Natural killer cell (primary cell): ENCODE measurements at regions of chr1 and their contacts with region 1.

Region 1: DNA sequence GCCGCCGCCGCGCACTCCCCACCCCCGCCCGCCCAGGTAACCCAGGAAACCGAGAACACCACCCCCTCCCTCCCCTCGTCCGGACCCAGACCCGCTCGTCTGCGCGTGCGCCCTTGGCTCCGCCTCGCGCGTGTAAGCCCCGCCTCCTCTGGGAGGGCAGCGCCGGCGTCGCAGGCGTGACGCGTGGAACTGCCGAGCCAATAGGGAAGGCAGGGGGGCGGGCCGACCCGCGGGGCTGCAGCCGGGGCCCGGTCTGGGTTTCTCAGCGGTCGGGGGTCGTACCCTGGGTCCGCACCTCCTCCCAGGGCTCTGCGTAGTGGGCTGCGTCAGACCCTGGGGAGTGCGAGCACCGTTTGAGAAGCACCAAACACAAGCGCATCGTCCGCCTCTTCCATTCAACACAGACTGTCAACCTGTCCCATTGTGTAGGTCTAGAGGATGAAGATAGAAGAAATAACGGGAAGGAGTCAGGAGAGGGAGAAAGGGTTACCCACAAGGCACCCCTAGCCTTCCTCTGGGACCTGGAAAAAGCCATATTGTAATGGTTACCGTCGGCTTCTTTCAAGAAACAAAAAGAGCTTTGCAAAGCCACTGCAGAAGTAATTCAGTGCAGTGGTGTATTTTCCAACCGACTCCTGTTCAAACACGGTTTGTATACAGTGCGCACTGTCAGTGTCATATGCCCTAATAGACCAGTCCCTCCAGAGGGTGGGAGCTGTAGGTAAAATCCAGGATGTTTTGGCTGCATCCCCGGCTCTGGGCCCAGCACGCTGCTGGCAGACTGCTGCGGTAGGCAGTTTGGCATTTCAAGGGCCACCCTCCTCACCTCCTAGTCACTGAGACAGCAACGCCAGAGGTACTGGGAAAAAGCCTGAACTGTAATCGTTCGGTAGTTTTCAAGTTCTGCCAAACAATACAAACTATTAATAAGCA is 473 bp upstream of the LYST start:
- DNase-seq: peak; percentile 99
- ATAC-seq: peak; percentile 72 to 89 (median 77)
- H3K4me3 ChIP-seq: peak overlapping the region; percentile 94
- H3K4me3 Mint-ChIP-seq: peak overlapping the region; percentile 99
- H3K27ac ChIP-seq: peak overlapping the region; percentile 99
- H3K27ac Mint-ChIP-seq: peak overlapping the region; percentile 99
- H3K4me1 ChIP-seq: peaks cover 63% of the 10 kb centered on the region
- H3K4me1 Mint-ChIP-seq: peaks cover 56 to 63% of the 10 kb centered on the region in 2 donors
- H3K27me3 ChIP-seq: no peaks in the 10 kb centered on the region
- H3K27me3 Mint-ChIP-seq: no peaks in the 10 kb centered on the region
- CTCF ChIP-seq: no peak

Region 2: GRCh38 chr1:235328357-235329138 is 538.6 kb before region 1 on chr1 and contains the start of gene GGPS1:
- intact Hi-C with region 1: loop called (anchors 5 kb)
- DNase-seq: peak; percentile 95 to 99
- ATAC-seq: peak; percentile 71 to 92 (median 81)
- H3K4me3 ChIP-seq: peak within 1 kb of the TSS; percentile 96
- H3K4me3 Mint-ChIP-seq: no peak within 1 kb of the TSS
- H3K27ac ChIP-seq: peak within 1 kb of the TSS; percentile 92
- H3K27ac Mint-ChIP-seq: no peak within 1 kb of the TSS
- H3K4me1 ChIP-seq: peaks cover 25% of the 10 kb centered on the region
- H3K4me1 Mint-ChIP-seq: peaks cover 33 to 39% of the 10 kb centered on the region in 2 donors
- H3K27me3 ChIP-seq: no peaks in the 10 kb centered on the region
- H3K27me3 Mint-ChIP-seq: no peaks in the 10 kb centered on the region
- CTCF ChIP-seq: no peak
- total RNA-seq, gene GGPS1: 18.7 to 26.0 (median 23.9) TPM

Region 3: DNA sequence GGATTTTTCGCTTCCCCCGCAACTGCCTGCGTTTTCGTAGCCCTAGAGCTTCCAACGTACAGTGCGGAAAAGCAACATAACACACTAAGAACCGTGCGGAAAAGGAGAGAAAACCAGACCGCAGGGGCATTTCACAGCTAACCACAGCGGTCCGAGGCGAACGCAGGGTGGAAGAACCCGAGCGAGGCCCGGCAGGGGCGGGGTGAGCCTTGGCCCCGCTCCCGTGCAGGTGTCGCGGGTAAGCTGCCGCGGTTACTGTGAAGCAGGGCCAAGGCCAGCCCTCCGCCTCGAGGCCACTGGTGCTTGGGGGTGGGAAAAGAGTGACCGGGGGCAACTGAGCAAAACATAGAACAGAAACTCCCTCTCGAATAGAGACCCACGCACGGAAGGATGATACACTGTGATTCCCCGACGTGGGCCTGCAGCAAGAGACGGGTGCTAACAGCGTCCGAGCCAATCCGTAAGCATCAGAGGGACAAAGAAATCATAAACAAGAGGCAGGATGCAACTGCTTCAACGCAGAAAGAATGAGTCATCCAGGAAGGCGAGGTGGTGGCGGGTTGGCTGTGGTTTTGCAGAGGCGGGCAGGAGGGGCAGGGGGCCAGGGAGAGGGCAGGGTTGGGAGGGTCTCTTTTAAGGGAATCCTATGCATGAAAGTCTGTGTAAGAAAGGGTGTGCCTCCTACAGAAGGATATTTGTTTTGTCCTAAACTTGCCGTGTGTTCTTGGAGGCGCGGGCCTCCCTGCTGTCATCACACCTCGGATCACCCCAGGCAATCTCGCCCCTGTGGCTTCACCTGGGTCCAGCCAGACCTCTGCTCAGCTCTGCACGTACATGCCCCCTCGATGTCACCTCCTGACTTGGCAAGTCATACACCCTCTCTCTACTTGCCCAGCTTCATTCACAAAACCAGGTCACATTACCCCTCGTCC is 224.9 kb before region 1 on chr1:
- intact Hi-C with region 1: loop called (anchors 1 kb)
- DNase-seq: peak; percentile 74 to 86
- ATAC-seq: peak; percentile 82 to 89 (median 84)
- H3K4me3 ChIP-seq: peak overlapping the region; percentile 35
- H3K4me3 Mint-ChIP-seq: peak overlapping the region; percentile 93
- H3K27ac ChIP-seq: peak overlapping the region; percentile 75
- H3K27ac Mint-ChIP-seq: peak overlapping the region; percentile 89 to 95
- H3K4me1 ChIP-seq: peaks cover 30% of the 10 kb centered on the region
- H3K4me1 Mint-ChIP-seq: peaks cover 21 to 22% of the 10 kb centered on the region in 2 donors
- H3K27me3 ChIP-seq: no peaks in the 10 kb centered on the region
- H3K27me3 Mint-ChIP-seq: peaks cover 15 to 27% of the 10 kb centered on the region in 2 donors
- CTCF ChIP-seq: no peak

Region 4: GRCh38 chr1:235888119-235888643 is 21.0 kb after region 1 on chr1:
- intact Hi-C with region 1: loop called (anchors 2 kb)
- DNase-seq: peak in 1 of 2 donors; percentile 79
- ATAC-seq: peak; percentile 70 to 84 (median 80)
- H3K4me3 ChIP-seq: no peak overlapping the region
- H3K4me3 Mint-ChIP-seq: no peak overlapping the region
- H3K27ac ChIP-seq: peak overlapping the region; percentile 67
- H3K27ac Mint-ChIP-seq: peak overlapping the region; percentile 80 to 90
- H3K4me1 ChIP-seq: peaks cover 43% of the 10 kb centered on the region
- H3K4me1 Mint-ChIP-seq: peaks cover 31 to 40% of the 10 kb centered on the region in 2 donors
- H3K27me3 ChIP-seq: no peaks in the 10 kb centered on the region
- H3K27me3 Mint-ChIP-seq: no peaks in the 10 kb centered on the region
- CTCF ChIP-seq: no peak

Region 5: DNA sequence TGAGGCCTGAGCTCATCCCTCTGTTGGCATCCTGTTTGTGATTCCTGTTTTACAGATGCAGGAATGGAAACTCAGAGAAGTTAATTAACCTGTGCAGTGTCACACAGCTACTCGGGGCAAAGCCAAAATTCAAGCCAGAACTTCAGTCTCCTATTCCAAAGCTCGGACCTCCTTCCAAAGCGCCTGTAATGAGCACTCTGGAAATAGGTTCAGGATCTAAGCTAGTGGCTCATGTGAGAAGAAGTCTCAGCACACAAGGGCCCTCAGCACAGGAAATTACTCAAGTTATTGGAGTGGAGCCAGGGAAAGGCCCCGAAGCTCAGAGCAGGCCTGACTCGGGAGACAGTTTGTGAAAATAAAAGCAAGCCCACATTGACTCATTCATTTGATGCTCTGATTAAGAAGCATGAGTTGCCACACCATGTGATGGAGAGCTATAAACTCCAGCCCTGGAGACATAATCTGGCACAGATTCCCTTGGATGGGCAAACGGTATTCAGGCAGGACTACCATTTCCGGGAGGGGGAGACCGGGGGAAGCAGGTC is 50.2 kb after region 1 on chr1:
- intact Hi-C with region 1: no loop called
- DNase-seq: peak in 1 of 2 donors; percentile 84
- ATAC-seq: peak; percentile 67 to 84 (median 78)
- H3K4me3 ChIP-seq: no peak overlapping the region
- H3K4me3 Mint-ChIP-seq: no peak overlapping the region
- H3K27ac ChIP-seq: peak overlapping the region; percentile 49
- H3K27ac Mint-ChIP-seq: peak overlapping the region in 1 of 2 donors; percentile 87
- H3K4me1 ChIP-seq: peaks cover 31% of the 10 kb centered on the region
- H3K4me1 Mint-ChIP-seq: peaks cover 0 to 19% of the 10 kb centered on the region in 2 donors
- H3K27me3 ChIP-seq: no peaks in the 10 kb centered on the region
- H3K27me3 Mint-ChIP-seq: no peaks in the 10 kb centered on the region
- CTCF ChIP-seq: no peak

Region 6: DNA sequence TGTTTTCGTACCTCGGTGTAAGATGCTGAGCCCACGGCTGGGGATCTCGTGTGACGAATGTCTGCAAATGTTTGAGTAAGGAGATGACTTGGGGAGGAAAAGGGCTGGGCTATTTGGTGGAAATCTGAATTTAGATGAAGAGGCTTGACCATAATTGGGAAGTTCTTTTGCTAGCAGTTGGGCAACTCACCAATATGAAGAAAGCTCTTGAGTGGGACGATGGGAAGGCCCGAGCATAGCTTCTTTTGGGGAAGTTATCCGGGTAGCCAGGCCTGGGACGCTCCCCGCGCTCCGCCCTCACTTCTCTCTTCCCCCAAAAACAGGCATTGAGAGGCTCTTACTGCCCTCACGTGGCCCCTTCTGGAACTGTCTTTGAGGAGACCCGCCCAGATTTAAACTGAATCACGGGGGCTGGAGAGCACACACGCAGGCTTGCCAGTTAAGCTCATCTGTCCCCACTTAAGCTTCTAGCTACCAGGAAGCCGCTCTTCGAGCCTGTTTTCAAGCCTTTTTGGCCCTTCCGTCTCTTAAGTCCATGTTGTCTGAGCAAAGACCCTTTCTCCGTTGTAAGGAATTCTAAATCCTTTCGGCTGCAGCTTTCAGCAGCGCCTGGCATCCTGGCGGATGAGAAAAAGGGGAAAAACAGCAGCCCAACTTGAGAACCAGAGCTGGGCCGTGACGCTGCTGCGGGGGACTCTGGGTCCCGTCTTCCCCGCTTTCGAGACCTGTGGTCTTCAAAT is 104.6 kb after region 1 on chr1:
- intact Hi-C with region 1: loop called (anchors 1 kb)
- DNase-seq: peak; percentile 85 to 93
- ATAC-seq: peak; percentile 98 to 100 (median 99)
- H3K4me3 ChIP-seq: peak overlapping the region; percentile 3
- H3K4me3 Mint-ChIP-seq: peak overlapping the region; percentile 87
- H3K27ac ChIP-seq: peak overlapping the region; percentile 62
- H3K27ac Mint-ChIP-seq: peak overlapping the region; percentile 70 to 83
- H3K4me1 ChIP-seq: peaks cover 13% of the 10 kb centered on the region
- H3K4me1 Mint-ChIP-seq: peaks cover 15% of the 10 kb centered on the region in 2 donors
- H3K27me3 ChIP-seq: no peaks in the 10 kb centered on the region
- H3K27me3 Mint-ChIP-seq: peaks cover 0 to 3% of the 10 kb centered on the region in 2 donors
- CTCF ChIP-seq: peak; percentile 84

Region 7: GRCh38 chr1:236795035-236795756 is 928.0 kb after region 1 on chr1 and contains the start of gene MTR:
- intact Hi-C with region 1: loop called (anchors 10 kb)
- DNase-seq: peak; percentile 94 to 98
- ATAC-seq: peak; percentile 91 to 98 (median 93)
- H3K4me3 ChIP-seq: peak within 1 kb of the TSS; percentile 96
- H3K4me3 Mint-ChIP-seq: peak within 1 kb of the TSS; percentile 98
- H3K27ac ChIP-seq: peak within 1 kb of the TSS; percentile 96
- H3K27ac Mint-ChIP-seq: peak within 1 kb of the TSS; percentile 95 to 98
- H3K4me1 ChIP-seq: peaks cover 8% of the 10 kb centered on the region
- H3K4me1 Mint-ChIP-seq: peaks cover 28 to 41% of the 10 kb centered on the region in 2 donors
- H3K27me3 ChIP-seq: no peaks in the 10 kb centered on the region
- H3K27me3 Mint-ChIP-seq: peaks cover 8 to 20% of the 10 kb centered on the region in 2 donors
- CTCF ChIP-seq: no peak
- total RNA-seq, gene MTR: 28.4 to 41.1 (median 38.4) TPM